ENCODE measurements at regions of chr13 and their contacts with region 1.

Region 1: DNA sequence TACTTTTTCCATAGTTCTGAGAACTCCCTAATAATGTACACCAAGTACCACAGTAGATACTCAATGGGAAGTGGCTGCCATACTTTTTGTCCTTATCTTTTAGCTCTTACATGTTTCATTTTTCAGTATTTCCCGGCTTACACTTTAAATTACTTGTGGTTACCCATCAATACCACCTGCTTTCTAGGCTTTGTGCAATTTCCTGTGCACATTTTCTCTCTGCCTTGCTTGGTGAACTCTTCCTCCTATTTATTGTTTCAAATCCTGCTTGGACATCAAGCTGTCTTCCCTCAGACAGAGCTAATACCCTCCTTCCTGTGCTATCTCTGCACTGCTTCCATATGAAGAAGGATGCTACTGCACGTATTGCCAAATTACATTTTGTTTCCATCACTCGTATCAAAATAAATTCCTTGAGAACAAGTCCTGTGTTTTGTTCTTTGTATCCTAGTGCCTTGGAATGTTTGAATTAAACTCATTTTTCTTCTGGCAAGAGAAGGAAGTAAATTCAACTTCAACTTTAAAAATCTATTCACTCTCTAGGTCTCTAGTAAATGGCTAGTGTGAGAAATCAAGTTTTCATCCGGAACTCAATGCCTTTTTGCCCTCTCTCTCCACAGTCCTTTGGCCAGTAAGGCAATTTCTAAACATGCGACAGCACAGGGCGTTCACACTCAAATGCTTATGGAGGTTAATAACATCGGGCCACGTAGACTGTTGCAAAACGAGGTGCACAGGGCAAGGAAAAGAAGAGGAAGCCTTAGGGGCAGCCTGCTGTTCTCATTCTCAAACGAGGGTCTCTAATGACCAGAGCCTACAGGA is 5.6 kb downstream of the ZAR1L start:
- DNase-seq: no peak
- H3K4me3 ChIP-seq: no peak overlapping the region
- H3K27ac ChIP-seq: no peak overlapping the region
- H3K4me1 ChIP-seq: no peaks in the 10 kb centered on the region
- H3K27me3 ChIP-seq: no peaks in the 10 kb centered on the region
- CTCF ChIP-seq: no peak
- POLR2A ChIP-seq: no peak

Region 2: GRCh38 chr13:32019612-32020233 is 289.8 kb before region 1 on chr13:
- intact Hi-C with region 1: loop called (anchors 10 kb)
- DNase-seq: peak; percentile 22 to 29
- H3K4me3 ChIP-seq: no peak overlapping the region
- H3K27ac ChIP-seq: no peak overlapping the region
- H3K4me1 ChIP-seq: no peaks in the 10 kb centered on the region
- H3K27me3 ChIP-seq: no peaks in the 10 kb centered on the region
- CTCF ChIP-seq: peak; percentile 11 to 64 (median 45)
- POLR2A ChIP-seq: no peak

Region 3: GRCh38 chr13:32278426-32278825 is 31.1 kb before region 1 on chr13:
- intact Hi-C with region 1: no loop called
- DNase-seq: no peak
- H3K4me3 ChIP-seq: no peak overlapping the region
- H3K27ac ChIP-seq: no peak overlapping the region
- H3K4me1 ChIP-seq: no peaks in the 10 kb centered on the region
- H3K27me3 ChIP-seq: no peaks in the 10 kb centered on the region
- CTCF ChIP-seq: no peak
- POLR2A ChIP-seq: no peak